ENCODE measurements at regions of chr6 and their contacts with region 1.

Region 1: DNA sequence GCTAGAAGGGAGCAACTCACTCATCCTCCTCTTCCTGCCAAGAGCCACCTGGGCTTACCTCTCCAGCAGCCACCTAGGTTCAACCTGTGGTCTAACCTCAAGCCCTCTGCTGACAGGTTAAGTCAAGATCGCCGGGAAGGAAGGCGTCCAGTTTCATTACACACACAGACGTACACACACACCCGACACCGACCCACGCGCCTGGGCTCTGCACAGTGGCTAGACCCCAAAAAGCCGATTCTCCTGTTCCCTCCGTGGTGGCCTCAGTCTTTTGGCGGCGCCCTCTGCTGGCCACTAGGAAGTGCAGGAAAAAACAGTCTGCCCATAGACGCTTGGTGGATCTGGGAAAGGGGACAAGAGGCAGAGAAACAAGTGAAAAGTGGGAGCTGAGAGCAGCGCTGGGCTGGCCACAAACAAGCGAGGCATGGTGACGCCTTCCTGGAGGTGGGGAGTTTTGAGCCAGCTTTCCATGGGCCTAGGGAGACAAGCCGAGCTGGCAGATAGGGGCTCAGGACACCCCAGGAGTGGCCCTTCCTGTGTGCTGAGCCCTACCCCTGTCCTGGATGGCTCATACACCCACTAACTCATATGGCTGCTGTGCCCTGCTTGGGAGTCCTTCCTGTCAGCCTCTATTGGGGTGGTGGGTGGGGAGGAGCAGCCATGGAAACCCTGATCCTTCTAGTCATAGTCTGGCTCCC is 52.7 kb downstream of the MRPL14 start:
- DNase-seq: peak; percentile 89
- ATAC-seq: peak; percentile 77

Region 2: GRCh38 chr6:43667245-43668150 is 407.1 kb before region 1 on chr6:
- intact Hi-C with region 1: loop called (anchors 5 kb)
- DNase-seq: peak; percentile 88
- ATAC-seq: peak; percentile 63

Region 3: GRCh38 chr6:43723737-43724295 is 350.8 kb before region 1 on chr6:
- intact Hi-C with region 1: loop called (anchors 5 kb)
- DNase-seq: peak; percentile 75
- ATAC-seq: peak; percentile 90

Region 4: GRCh38 chr6:43769526-43770416 is 304.8 kb before region 1 on chr6 and contains the start of gene VEGFA:
- intact Hi-C with region 1: loop called (anchors 2 kb)
- DNase-seq: peak; percentile 95
- ATAC-seq: peak; percentile 77
- total RNA-seq, gene VEGFA: 230 TPM

Region 5: DNA sequence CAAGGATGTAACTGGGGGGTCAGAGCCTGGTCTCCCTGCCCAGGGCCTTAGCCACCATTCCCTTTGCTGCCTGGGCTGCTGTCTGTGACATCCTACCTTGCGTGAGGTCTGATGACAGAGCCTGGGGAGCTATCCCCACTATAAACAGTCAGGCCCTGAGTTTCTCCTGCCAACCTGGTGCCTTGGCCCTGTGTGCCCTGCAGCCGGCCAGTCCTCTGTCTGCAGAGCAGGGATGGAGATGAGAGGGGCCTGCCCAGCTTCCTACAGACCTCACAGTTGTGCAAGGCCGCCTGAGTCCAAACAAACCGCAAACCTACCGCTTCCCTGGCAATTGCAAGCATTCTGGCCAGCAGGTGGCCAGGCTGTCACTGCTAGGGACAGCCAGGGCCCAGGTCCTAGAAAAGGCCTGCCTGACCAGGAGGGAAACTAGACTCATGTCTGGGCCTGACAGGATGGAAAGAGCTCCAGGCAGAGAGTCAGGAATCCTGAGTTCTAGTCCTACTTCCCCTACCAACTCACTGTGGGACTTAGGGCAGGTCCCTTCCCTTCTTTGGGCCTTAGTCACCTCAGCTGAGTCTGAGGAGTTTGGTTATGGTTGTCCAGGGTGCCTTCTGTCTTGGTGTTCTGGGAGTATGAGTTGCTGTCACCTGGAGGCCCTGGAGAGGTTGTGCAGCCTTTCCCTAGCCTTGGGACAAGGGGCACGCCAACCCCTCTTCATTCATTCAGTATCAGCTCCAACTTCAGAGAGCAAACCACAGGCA is 218.4 kb before region 1 on chr6:
- intact Hi-C with region 1: loop called (anchors 10 kb)
- DNase-seq: peak; percentile 51
- ATAC-seq: peak; percentile 75

Region 6: GRCh38 chr6:43951063-43951755 is 123.4 kb before region 1 on chr6:
- intact Hi-C with region 1: loop called (anchors 5 kb)
- DNase-seq: peak; percentile 81
- ATAC-seq: peak; percentile 64

Region 7: DNA sequence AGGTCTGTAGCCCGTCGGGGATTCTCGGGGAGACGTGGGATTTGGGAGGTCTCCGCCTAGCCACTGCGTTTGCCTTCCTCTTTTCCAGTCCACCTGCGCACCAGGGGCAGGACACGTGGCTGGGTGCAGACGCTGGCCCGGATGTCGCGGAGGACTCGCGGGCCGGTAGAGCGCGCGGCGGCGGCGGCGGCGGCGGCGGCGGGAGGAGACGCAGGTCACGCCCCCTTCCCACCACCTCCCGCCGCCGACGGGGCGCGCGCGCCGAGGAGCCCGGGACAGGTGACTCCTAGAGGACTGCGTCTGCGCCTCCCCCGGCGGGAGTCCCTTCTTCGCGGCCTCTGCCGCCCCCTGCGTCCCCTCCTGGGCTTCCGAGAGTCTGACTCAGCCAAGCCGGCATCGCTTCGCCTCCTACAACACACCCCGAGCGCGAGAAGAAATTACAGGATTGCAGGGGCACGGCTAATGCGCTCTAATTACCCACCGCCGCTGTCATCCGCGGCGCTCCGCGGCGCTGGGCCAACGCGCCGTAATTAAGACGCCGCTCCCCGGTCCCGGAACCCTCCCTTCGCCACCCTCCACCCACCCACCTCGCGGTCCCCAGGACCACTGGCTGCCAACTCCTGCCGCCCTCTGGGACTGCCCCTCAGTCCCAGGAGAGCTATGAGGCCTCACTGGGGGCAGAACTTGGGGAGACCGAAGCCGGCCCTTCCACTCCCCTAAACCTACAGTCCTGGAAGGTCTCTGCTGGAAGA is 71.8 kb before region 1 on chr6:
- intact Hi-C with region 1: loop called (anchors 5 kb)
- DNase-seq: peak; percentile 63
- ATAC-seq: peak; percentile 42

Region 8: GRCh38 chr6:44127186-44128019 is 52.8 kb after region 1 on chr6 and contains the starts of genes MRPL14 and TMEM63B:
- intact Hi-C with region 1: no loop called
- DNase-seq: peak; percentile 93
- ATAC-seq: peak; percentile 97
- total RNA-seq, gene MRPL14: 41.0 TPM
- total RNA-seq, gene TMEM63B: 46.3 TPM

Region 9: GRCh38 chr6:44192428-44193041 is 117.9 kb after region 1 on chr6:
- intact Hi-C with region 1: no loop called
- DNase-seq: no peak
- ATAC-seq: peak; percentile 43

Measured in Right ventricle myocardium superior (tissue), 1 donor.